Caco-2 (cell line): ENCODE measurements at regions of chr20 and their contacts with region 1.

Region 1: GRCh38 chr20:48620519-48621254 is 207.1 kb downstream of the PREX1 start:
- DNase-seq: peak; percentile 94 to 98
- H3K4me3 ChIP-seq: peak overlapping the region; percentile 20
- H3K4me3 Mint-ChIP-seq: peak overlapping the region; percentile 70
- H3K27ac Mint-ChIP-seq: peak overlapping the region; percentile 31
- H3K4me1 ChIP-seq: peaks cover 11% of the 10 kb centered on the region
- H3K4me1 Mint-ChIP-seq: peaks cover 6% of the 10 kb centered on the region
- H3K27me3 ChIP-seq: no peaks in the 10 kb centered on the region
- H3K27me3 Mint-ChIP-seq: no peaks in the 10 kb centered on the region
- CTCF ChIP-seq: peak; percentile 99 to 100

Region 2: DNA sequence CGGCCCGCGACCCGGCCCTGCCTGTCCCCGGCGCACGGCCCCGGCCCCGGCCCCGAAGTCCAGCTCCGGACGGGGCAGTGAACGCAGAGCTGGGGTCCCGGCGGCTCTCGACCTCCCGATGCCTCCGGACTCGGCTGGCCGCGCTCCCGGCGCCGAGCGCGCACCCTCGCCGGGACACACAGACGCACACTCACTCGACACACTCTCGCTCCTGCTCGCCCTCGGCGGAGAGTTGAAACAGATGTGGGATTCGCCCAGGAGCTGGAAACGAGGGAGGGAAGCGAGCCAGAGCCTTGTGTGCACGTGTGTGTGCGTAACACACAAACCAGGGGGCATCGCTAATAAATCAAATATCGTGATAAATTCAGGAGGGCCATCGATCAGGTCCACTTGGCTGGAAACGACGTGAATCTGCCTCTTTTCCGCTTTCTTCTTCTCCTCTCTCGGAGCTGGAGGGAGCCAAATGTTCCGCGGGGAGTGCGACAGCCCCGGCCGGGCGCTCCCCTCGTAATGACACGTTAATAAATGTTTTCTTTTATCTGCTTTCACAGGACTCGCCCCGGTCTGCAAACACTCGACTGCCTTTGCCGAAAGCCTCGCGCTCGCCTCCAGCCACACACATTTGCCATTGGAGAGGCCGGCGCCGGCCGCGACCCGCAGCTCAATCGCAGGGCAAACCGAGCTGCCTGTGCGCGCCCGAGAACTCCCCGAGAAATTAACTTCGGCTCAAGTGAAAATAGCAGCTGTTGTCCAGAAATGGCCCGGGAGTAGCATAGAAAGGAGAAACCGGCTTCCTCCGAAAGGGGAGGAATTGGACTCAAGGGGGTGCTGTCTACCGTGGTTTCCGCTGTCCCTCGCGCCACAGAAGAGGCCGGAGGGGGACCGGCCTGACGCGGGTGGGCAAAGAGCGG is 834.6 kb before region 1 on chr20:
- CTCF ChIA-PET with region 1: interaction called, 22 read pairs
- POLR2A ChIA-PET with region 1: no interaction called
- intact Hi-C with region 1: loop called (anchors 1 kb)
- DNase-seq: peak; percentile 89 to 91
- H3K4me3 ChIP-seq: peak overlapping the region; percentile 55
- H3K4me3 Mint-ChIP-seq: peak overlapping the region; percentile 96
- H3K27ac Mint-ChIP-seq: peak overlapping the region; percentile 85
- H3K4me1 ChIP-seq: peaks cover 19% of the 10 kb centered on the region
- H3K4me1 Mint-ChIP-seq: peaks cover 35% of the 10 kb centered on the region
- H3K27me3 ChIP-seq: no peaks in the 10 kb centered on the region
- H3K27me3 Mint-ChIP-seq: peaks cover 2% of the 10 kb centered on the region
- CTCF ChIP-seq: peak; percentile 93

Region 3: GRCh38 chr20:48329635-48330277 is 290.9 kb before region 1 on chr20:
- CTCF ChIA-PET with region 1: interaction called, 14 read pairs
- POLR2A ChIA-PET with region 1: no interaction called
- intact Hi-C with region 1: loop called (anchors 10 kb)
- DNase-seq: peak; percentile 73 to 76
- H3K4me3 ChIP-seq: no peak overlapping the region
- H3K4me3 Mint-ChIP-seq: no peak overlapping the region
- H3K27ac Mint-ChIP-seq: no peak overlapping the region
- H3K4me1 ChIP-seq: peaks cover 27% of the 10 kb centered on the region
- H3K4me1 Mint-ChIP-seq: peaks cover 38% of the 10 kb centered on the region
- H3K27me3 ChIP-seq: no peaks in the 10 kb centered on the region
- H3K27me3 Mint-ChIP-seq: no peaks in the 10 kb centered on the region
- CTCF ChIP-seq: peak; percentile 82

Region 4: DNA sequence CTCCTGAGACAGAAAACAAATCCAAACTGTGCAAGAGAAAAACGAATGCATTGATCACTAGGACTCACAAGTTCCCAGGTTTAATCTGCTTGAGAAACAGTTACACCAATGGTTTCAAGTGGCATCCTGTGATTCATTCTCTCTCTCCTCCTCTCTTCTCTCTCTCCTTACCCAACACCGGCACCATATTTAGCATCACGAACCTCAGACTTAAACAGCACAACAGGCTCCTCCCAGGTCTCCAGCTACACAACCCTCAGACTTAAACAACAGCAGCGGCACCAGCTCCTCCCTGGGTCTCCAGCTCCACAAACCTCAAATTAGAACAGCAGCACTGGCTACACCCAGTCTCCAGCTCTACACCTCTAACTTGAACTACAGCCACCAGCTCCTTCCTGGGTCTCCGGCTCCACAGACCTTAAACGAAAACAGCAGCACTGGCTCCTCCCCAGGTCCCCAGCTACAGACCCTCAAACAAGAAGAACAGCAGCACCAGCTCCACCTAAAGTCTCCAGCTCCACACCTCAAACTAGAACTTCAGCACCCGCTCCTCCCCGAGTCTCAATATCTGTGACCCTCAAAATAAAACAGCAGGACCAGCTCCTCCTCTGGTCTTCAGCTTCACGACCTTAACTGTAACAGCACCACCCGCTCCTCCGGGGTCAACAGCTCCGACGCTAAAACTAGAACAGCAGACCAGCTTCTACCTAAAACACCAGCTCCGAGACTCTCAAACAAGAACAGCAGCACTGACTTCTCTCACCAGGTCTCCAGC is 148.7 kb before region 1 on chr20:
- CTCF ChIA-PET with region 1: interaction called, 23 read pairs
- POLR2A ChIA-PET with region 1: no interaction called
- intact Hi-C with region 1: no loop called
- DNase-seq: no peak
- H3K4me3 ChIP-seq: no peak overlapping the region
- H3K4me3 Mint-ChIP-seq: no peak overlapping the region
- H3K27ac Mint-ChIP-seq: no peak overlapping the region
- H3K4me1 ChIP-seq: no peaks in the 10 kb centered on the region
- H3K4me1 Mint-ChIP-seq: peaks cover 4% of the 10 kb centered on the region
- H3K27me3 ChIP-seq: peaks cover 2% of the 10 kb centered on the region; the same call in 1 of the 2 replicates
- H3K27me3 Mint-ChIP-seq: peaks cover 4% of the 10 kb centered on the region
- CTCF ChIP-seq: no peak

Region 5: DNA sequence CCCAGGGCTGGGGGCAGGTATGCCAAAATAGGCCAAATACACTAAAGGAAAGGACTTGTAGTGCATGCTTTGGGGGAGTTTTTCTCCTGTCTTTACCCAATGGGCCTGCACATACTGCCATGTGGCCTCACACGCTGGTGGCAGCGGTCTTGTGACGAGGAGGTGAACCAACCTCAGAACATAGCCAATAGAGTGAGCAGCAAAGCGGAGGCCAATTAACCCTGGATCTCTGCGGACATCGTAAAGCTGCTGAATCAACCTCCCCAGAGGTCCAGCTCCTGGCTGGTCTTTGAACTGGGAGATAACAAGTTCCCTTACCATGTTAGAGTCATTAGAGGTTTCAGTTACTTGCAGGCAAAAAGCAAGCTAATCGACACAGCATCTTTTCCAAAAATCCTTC is 73.0 kb before region 1 on chr20:
- CTCF ChIA-PET with region 1: interaction called, 11 read pairs
- POLR2A ChIA-PET with region 1: no interaction called
- intact Hi-C with region 1: no loop called
- DNase-seq: peak; percentile 50 to 76
- H3K4me3 ChIP-seq: no peak overlapping the region
- H3K4me3 Mint-ChIP-seq: no peak overlapping the region
- H3K27ac Mint-ChIP-seq: no peak overlapping the region
- H3K4me1 ChIP-seq: peaks cover 25% of the 10 kb centered on the region
- H3K4me1 Mint-ChIP-seq: peaks cover 15% of the 10 kb centered on the region
- H3K27me3 ChIP-seq: no peaks in the 10 kb centered on the region
- H3K27me3 Mint-ChIP-seq: no peaks in the 10 kb centered on the region
- CTCF ChIP-seq: no peak

Region 6: DNA sequence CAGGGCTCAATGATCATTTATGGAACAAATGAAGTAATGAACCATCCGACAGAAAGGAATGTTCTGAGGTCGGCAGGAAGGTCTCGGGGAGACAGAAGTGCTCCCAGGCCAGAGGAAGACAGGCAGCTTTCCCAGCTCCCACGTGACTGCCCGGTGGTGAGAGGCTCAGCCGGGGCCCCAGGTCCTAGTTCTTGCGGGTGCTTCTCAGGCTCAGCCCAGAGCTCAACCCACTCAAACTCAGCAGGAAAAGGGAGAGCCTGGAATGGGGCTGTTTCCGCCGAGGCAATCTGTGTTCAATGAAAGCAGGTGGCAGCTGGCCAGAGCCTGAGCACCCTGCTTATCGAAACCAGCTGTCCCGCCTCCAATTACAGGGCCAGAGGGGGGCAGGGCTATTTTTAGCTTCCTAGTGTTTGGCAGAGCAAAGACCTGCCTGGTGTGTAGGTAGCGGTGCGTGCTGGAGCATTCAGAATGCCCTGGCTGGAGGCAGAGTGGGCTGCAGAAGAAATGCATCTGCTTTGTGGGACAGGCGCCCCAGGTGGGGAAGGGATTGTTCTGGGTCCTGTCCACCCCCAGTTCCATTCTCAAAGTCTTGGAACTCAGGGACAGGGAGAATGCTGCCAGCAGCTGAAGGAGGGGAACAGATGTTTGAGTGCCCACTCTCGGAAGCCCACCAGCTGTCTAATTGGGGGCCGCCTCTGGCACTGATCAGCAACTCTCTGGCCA is 62.0 kb after region 1 on chr20:
- CTCF ChIA-PET with region 1: no interaction called
- POLR2A ChIA-PET with region 1: no interaction called
- intact Hi-C with region 1: no loop called
- DNase-seq: peak in 1 of 2 experiments; percentile 45
- H3K4me3 ChIP-seq: no peak overlapping the region
- H3K4me3 Mint-ChIP-seq: no peak overlapping the region
- H3K27ac Mint-ChIP-seq: no peak overlapping the region
- H3K4me1 ChIP-seq: peaks cover 20% of the 10 kb centered on the region
- H3K4me1 Mint-ChIP-seq: no peaks in the 10 kb centered on the region
- H3K27me3 ChIP-seq: no peaks in the 10 kb centered on the region
- H3K27me3 Mint-ChIP-seq: no peaks in the 10 kb centered on the region
- CTCF ChIP-seq: no peak